Naive thymus-derived CD4-positive, alpha-beta T cell (primary cell): ENCODE measurements at regions of chr7 and their contacts with region 1.

Region 1: DNA sequence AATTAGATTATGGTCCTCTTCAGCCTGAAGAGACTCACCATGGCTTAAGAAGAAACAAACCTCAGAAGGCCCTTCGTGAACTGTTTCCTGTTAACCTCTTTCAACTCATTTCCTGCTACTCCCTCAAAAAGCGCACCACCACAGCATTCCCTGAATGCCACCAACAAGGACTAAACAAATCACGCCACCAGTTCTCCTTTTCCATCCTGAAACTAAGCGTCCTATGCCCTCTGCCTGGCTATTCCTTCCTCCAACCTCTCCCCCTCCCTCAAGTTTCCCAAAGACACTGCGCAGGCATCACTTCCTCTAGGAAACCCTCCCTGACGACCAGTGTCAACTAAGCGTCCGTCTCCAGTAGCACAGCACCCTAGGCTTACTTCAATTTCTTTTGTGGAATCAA is 12.0 kb downstream of the YWHAG start:
- DNase-seq: no peak
- ATAC-seq: no peak
- H3K4me3 ChIP-seq: no peak overlapping the region
- H3K4me3 Mint-ChIP-seq: peak overlapping the region; percentile 2 to 76 (median 56)
- H3K27ac ChIP-seq: no peak overlapping the region
- H3K27ac Mint-ChIP-seq: peak overlapping the region; percentile 20 to 84 (median 62)
- H3K4me1 ChIP-seq: peaks cover 0 to 16% of the 10 kb centered on the region in 2 donors
- H3K4me1 Mint-ChIP-seq: peaks cover 52 to 83% (median 74%) of the 10 kb centered on the region in 7 donors
- H3K27me3 ChIP-seq: no peaks in the 10 kb centered on the region
- H3K27me3 Mint-ChIP-seq: no peaks in the 10 kb centered on the region

Region 2: DNA sequence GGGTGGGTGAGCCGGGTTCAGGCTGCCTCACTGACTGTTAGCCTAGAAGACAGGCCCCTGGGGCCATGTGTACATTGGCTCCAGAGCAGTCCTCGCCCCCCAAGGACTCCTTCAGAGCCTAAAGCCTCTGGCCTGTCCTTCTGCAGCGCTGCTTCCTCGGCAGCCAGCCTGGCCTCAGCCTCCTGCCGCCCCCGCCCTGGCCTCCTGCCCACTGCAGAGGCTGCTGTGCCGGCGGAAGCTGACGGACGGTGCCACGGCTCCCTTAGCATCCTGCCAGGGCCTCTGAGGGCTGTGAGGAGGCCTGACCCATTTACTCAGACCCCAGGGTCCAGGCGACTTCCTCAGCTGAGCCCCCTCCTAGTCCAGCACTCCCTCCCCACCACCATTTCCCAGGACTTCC is 140.1 kb before region 1 on chr7:
- CTCF ChIA-PET with region 1: no interaction called
- POLR2A ChIA-PET with region 1: no interaction called
- intact Hi-C with region 1: no loop called
- DNase-seq: no peak
- ATAC-seq: no peak
- H3K4me3 ChIP-seq: no peak overlapping the region
- H3K4me3 Mint-ChIP-seq: no peak overlapping the region
- H3K27ac ChIP-seq: no peak overlapping the region
- H3K27ac Mint-ChIP-seq: no peak overlapping the region
- H3K4me1 ChIP-seq: no peaks in the 10 kb centered on the region
- H3K4me1 Mint-ChIP-seq: peaks cover 0 to 2% (median 0%) of the 10 kb centered on the region in 7 donors
- H3K27me3 ChIP-seq: peaks cover 0 to 3% of the 10 kb centered on the region in 2 donors
- H3K27me3 Mint-ChIP-seq: peaks cover 3 to 29% (median 19%) of the 10 kb centered on the region in 5 donors

Region 3: GRCh38 chr7:76327610-76328009 is 19.2 kb before region 1 on chr7:
- CTCF ChIA-PET with region 1: no interaction called
- POLR2A ChIA-PET with region 1: no interaction called
- intact Hi-C with region 1: loop called in 1 of 2 experiments (anchors 2 kb)
- DNase-seq: no peak
- ATAC-seq: peak; percentile 68
- H3K4me3 ChIP-seq: no peak overlapping the region
- H3K4me3 Mint-ChIP-seq: no peak overlapping the region
- H3K27ac ChIP-seq: no peak overlapping the region
- H3K27ac Mint-ChIP-seq: peak overlapping the region in 5 of 9 donors; percentile 25 to 81 (median 46)
- H3K4me1 ChIP-seq: no peaks in the 10 kb centered on the region
- H3K4me1 Mint-ChIP-seq: peaks cover 22 to 51% (median 40%) of the 10 kb centered on the region in 7 donors
- H3K27me3 ChIP-seq: no peaks in the 10 kb centered on the region
- H3K27me3 Mint-ChIP-seq: no peaks in the 10 kb centered on the region

Region 4: GRCh38 chr7:76377186-76377918 is 30.6 kb after region 1 on chr7:
- CTCF ChIA-PET with region 1: no interaction called
- POLR2A ChIA-PET with region 1: no interaction called
- intact Hi-C with region 1: no loop called
- DNase-seq: no peak
- ATAC-seq: no peak
- H3K4me3 ChIP-seq: no peak overlapping the region
- H3K4me3 Mint-ChIP-seq: no peak overlapping the region
- H3K27ac ChIP-seq: no peak overlapping the region
- H3K27ac Mint-ChIP-seq: no peak overlapping the region
- H3K4me1 ChIP-seq: peaks cover 3 to 4% of the 10 kb centered on the region in 2 donors
- H3K4me1 Mint-ChIP-seq: peaks cover 0 to 24% (median 0%) of the 10 kb centered on the region in 7 donors
- H3K27me3 ChIP-seq: no peaks in the 10 kb centered on the region
- H3K27me3 Mint-ChIP-seq: peaks cover 0 to 16% (median 0%) of the 10 kb centered on the region in 5 donors